ENCODE measurements at regions of chr5 and their contacts with region 1.

Region 1: GRCh38 chr5:39283231-39283818 is 64.0 kb upstream of the FYB1 start:
- DNase-seq: peak; percentile 60
- CTCF ChIP-seq: peak; percentile 39

Region 2: DNA sequence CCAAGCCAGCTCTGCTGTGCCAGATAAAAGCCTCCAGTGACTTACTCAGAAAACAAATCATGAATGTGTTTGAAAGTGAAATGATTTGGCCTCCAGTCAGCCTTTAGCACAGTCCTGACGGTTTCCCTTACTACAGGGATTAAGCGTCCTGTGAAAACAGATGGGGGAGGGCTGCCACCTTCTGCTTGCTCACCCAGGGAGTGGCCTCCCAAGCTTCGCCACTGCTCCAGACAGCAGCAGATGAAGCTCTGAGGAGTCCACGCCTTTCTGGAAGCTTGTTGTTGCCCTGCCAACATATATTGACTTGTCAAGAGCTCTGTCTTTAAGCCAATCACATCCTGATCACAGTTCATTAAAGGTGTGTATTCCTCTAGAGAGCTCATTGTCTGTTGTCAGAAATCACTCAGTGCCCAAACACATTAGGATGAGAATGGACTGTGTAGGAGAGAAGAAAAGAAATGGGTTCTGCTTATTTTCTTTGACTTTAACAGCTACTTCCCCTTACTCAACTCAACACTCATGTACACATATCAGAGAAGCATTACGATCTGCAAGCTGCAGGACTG is 59.0 kb before region 1 on chr5:
- in situ Hi-C with region 1: loop called (anchors 10 kb)
- DNase-seq: no peak
- CTCF ChIP-seq: no peak

Region 3: DNA sequence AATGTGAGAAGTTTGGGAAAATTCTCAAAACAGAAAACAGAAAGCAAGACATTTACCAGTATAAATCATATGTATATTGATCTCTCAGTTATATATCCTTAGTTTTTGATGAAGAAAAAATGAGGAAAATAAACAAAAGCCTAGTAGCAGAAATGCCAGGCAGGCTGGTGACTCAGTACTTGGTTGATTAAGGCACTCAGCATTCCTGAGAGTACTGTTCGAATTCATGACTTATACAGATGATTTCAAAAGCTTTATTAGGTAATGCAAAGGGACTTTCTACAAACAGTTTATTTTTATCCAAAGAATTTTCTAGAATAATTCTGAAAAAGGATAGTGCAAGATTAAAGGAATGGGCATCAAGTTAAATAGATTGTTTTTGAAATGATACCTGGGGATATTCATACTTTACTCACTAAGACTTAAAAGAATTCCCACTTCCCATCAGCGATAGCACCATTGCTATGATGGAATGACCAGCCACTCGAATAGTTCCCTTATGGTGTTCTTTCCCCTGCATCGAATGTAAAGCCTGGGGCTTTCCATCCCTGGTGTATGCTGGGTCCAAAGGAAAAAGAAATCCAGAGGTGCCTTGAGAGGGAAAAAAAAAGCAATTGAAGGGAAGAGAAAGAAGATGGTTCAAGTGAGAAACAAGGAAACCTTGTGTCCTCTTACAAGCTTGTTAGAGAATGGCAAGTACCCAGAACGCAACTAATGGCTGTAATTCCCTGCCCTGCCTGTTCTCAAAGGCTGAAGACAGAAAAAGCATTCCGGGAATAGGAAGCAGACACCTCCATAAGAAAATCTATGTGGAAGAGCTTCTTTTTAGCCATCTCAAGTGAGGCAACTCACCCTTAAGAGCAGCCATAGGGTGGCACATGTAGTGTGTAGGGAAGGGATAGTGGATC is 492.4 kb after region 1 on chr5:
- in situ Hi-C with region 1: no loop called
- DNase-seq: no peak
- CTCF ChIP-seq: no peak

Measured in GM13976 (cell line).